WTC11 (cell line): ENCODE measurements at regions of chr2 and their contacts with region 1.

Region 1: DNA sequence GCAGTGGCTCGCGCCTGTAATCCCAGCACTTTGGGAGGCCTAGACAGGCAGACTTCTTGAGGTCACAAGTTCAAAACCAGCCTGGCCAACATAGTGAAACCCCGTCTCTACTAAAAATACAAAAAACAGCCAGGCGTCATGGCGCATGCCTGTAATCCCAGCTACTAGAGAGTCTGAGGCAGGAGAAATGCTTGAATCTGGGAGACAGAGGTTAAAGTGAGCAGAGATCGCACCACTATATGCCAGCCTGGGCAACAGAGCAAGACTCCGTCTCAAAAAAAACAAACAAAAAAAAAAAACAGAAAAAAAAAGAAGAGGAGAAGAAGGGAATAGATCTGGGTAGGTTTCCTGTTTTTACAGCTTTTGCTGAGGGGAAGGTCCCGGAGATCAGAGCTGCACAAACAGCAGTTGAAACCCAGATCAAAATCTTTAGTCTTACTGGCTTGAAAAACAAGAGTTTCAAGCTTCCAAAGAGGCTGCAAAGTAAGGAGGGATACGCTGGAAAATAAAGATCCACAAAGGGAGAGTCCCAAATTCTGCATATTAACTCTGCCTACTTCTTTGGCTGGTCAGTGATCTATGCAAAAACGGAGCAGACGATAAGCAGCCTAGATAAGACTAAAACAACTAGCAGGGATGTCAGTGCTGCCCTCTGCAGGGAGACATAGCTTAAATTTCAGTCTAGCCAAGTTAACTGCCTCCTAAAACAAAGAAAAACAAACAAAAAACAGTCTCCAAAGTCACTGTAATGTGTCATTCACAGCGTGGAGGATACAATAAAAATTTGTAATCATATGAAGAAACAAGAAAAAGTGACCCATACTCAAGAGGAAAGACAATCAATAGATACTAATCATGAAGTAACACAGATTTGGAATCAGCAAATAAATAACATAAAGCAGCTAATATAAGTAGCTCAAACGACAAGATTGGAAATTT is 74.1 kb downstream of the TLK1 start:
- DNase-seq: peak; percentile 62
- ATAC-seq: peak; percentile 91
- H3K4me3 Mint-ChIP-seq: no peak overlapping the region
- H3K27ac Mint-ChIP-seq: peak overlapping the region; percentile 88
- H3K4me1 Mint-ChIP-seq: peaks cover 36% of the 10 kb centered on the region
- H3K27me3 Mint-ChIP-seq: no peaks in the 10 kb centered on the region
- CTCF ChIP-seq: peak; percentile 38; the same call in 1 of the 2 replicates

Region 2: DNA sequence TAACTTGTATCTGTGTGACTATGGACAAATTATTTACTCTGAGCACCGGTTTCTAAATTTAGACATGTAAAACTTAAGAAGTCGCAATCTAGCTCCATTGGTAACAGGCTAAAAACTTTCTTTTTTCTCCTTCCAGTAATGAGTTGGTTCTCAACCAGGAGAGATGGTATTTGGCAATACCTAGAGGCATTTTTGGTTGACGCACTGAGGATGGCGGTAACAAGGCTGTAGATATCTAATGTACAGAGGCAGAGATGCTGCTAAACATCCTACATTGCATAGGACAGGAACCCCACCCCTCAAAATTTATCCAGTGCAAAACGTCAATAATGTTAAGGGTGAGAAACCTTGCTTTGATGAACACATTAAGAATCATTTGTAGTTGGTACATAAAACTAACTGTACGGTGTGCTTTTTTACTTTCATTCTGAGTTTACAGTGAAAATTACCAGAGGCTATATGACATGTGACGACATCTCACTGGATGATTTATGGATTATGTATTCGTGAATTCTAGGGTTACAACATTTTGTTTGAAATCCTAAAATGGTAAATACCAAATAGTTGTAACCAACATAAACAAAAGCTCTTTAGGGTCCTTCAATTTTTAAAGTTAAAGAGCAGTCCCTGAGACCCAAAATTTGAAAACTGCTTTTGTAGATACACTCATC is 17.2 kb before region 1 on chr2:
- CTCF ChIA-PET with region 1: interaction called, 10 read pairs
- POLR2A ChIA-PET with region 1: no interaction called
- DNase-seq: no peak
- ATAC-seq: no peak
- H3K4me3 Mint-ChIP-seq: no peak overlapping the region
- H3K27ac Mint-ChIP-seq: no peak overlapping the region
- H3K4me1 Mint-ChIP-seq: peaks cover 7% of the 10 kb centered on the region
- H3K27me3 Mint-ChIP-seq: no peaks in the 10 kb centered on the region
- CTCF ChIP-seq: no peak

Region 3: DNA sequence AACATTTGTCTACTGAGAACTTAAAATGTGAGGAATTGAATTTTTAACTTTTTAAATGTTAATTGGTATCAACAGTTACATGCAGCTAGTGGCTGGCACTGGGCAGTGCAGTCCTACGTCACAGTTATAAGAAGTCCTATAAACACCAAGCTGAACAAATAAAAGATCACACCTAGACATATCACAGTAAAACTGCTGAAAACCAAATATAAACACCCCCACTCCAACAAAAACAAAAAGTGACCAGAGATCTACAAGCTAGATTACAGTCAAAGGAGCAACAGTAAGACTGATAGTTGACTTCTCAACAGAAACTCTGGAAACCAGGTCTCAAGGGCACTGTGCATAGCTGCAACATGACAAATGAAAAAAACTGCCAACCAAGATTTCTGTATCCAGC is 54.7 kb after region 1 on chr2:
- CTCF ChIA-PET with region 1: interaction called, 13 read pairs
- POLR2A ChIA-PET with region 1: no interaction called
- DNase-seq: no peak
- ATAC-seq: peak; percentile 27; the same call in 1 of the 2 replicates
- H3K4me3 Mint-ChIP-seq: no peak overlapping the region
- H3K27ac Mint-ChIP-seq: peak overlapping the region; percentile 77
- H3K4me1 Mint-ChIP-seq: peaks cover 65% of the 10 kb centered on the region
- H3K27me3 Mint-ChIP-seq: no peaks in the 10 kb centered on the region
- CTCF ChIP-seq: no peak

Region 4: GRCh38 chr2:171287611-171288010 is 201.0 kb after region 1 on chr2:
- CTCF ChIA-PET with region 1: no interaction called
- POLR2A ChIA-PET with region 1: no interaction called
- DNase-seq: no peak
- ATAC-seq: no peak
- H3K4me3 Mint-ChIP-seq: no peak overlapping the region
- H3K27ac Mint-ChIP-seq: no peak overlapping the region
- H3K4me1 Mint-ChIP-seq: peaks cover 19% of the 10 kb centered on the region
- H3K27me3 Mint-ChIP-seq: no peaks in the 10 kb centered on the region
- CTCF ChIP-seq: no peak